AG04449 (cell line): ENCODE measurements at regions of chr10 and their contacts with region 1.

Region 1: DNA sequence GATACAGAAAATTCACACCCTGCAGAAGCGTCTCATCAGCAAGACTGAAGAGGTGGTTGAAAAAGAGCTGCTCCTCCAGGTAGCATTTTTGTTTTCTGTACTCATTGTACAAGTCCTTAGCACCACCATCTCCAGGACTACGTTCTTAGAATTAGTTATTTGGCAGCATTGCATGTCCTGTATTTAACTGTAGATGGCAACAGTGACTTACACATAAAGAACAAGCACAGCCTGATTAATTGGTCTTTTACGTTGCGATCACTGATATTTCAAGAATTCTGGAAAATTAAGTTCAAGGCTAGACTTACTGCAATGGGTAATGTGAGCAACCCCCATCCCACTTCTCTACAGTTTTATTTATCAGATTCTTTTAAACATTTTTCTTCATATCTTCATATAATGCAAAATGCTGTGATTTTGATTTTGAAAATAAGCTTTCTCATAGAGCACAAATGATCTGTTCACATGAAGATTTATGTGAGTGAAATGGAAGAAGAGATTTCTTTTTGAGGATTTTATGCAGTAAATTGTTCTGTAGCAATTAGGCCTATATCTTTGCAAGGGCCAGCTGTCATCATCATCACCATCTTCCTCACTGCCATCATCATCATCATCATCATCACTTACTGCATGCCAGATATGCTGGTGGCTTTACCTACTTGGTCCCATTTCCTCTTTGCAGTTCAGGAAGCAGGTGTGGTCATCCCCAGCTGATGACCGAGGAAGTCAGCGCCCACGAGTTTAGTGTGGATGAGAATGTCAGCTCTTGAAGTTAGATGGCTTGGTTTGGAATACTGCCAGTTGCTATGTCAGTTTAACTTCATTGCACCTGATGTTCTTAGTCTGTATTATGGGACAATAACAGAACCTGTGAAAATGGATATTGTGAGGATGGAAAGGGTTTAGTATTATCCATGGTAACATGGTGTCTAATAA is 53.4 kb downstream of the CFAP58 start:
- DNase-seq: peak; percentile 21
- H3K4me3 ChIP-seq: no peak overlapping the region
- CTCF ChIP-seq: peak; percentile 64

Region 2: GRCh38 chr10:104580774-104581675 is 174.0 kb after region 1 on chr10:
- CTCF ChIA-PET with region 1: interaction called, 44 read pairs
- POLR2A ChIA-PET with region 1: no interaction called
- DNase-seq: no peak
- H3K4me3 ChIP-seq: no peak overlapping the region
- CTCF ChIP-seq: peak; percentile 85

Region 3: DNA sequence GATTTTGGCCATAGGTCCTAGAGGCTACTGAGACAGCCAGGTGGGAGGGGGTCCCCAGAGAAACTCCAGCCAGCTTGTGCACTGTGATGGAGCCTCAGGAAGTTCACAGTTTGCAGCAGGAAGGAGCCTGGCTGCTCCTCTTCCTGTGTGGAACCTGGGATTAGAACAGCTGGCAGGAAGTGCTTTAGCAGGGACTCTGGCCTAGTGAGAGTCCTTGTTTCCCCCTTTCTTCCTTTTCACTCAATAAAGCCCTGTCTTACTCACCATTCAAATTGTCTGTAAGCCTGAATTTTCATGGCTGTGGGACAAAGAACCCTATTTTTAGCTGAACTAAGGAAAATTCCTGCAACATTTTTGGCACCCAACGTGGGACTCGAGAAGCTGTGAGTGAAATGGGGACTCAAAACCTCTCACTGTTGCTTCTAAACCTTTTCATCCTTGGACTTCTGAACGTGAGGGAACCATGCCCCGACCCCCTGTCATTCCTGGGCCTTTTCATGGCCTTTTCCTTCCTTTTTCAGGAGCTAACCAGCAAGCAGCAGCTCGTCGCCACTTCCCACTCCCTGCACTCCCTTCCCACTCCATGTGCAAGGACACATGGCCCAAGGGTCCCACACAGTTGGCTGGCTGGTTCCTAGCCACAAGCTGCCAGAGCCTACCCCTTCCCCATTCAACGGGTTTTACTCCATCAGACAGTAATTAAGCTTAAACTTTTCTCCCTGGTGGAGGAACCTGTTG is 201.3 kb after region 1 on chr10:
- CTCF ChIA-PET with region 1: interaction called, 11 read pairs
- POLR2A ChIA-PET with region 1: no interaction called
- DNase-seq: no peak
- H3K4me3 ChIP-seq: no peak overlapping the region
- CTCF ChIP-seq: no peak

Region 4: DNA sequence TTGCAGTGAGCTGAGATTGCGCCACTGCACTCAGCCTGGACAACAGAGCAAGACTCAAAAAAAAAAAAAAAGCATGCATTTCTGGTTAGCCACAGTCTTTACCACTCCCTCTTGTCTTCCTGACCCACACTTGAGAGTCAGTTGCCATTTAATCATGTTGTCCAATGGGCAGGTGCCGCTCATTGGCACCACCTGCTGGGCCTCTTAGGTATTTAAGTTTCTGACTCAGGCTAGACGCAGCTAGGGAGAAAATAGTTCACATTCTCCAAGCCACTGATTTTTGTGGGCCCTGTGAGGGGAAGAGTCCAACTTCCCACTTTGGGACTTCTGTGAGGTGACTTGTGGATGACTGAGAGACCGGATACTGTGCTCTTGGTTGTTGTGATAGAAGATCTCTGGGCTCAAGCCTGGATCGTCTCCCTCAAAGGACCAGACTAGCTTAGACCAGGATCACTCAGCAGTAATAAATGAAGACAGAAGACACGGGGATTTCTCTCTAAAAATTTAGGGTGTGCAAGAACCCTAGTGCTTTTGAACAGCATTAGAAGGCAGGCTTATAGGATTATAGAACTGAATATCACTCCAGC is 207.4 kb after region 1 on chr10:
- CTCF ChIA-PET with region 1: interaction called, 63 read pairs
- POLR2A ChIA-PET with region 1: no interaction called
- DNase-seq: no peak
- H3K4me3 ChIP-seq: no peak overlapping the region
- CTCF ChIP-seq: peak; percentile 52

Region 5: GRCh38 chr10:104622598-104623209 is 215.7 kb after region 1 on chr10:
- CTCF ChIA-PET with region 1: interaction called, 63 read pairs
- POLR2A ChIA-PET with region 1: interaction called, 3 read pairs
- DNase-seq: no peak
- H3K4me3 ChIP-seq: no peak overlapping the region
- CTCF ChIP-seq: peak; percentile 47

Region 6: GRCh38 chr10:104676874-104677273 is 269.9 kb after region 1 on chr10:
- CTCF ChIA-PET with region 1: no interaction called
- POLR2A ChIA-PET with region 1: no interaction called
- DNase-seq: no peak
- H3K4me3 ChIP-seq: no peak overlapping the region
- CTCF ChIP-seq: no peak

Region 7: DNA sequence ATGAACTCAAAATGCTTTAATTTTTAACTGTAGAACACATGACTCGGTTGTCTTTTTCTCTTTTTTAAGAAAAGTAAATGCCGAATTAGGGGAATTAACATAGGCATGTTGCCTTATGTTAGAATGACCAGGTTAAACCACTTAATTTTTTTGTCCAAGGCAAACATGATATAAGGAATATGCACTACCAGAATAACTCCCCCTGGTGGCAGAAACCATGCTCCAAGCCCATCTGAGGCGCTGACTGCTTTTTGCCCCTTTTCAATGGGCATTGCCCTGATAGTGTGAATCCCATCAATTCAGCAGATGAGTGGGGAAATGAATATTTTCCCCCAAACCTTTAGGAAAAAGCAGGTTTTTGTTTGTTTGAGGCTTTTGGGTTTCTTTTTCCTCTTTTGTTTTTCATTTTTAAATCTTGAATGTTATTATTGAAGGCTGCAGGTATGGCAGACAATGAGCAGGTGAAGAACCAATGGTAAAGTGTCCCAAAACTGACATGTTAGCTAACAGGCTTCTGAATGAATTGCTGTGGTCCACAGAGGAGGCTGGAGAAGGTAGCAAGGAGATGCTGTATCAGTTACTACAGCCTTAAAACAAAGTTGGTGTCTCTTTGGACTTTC is 518.4 kb after region 1 on chr10:
- CTCF ChIA-PET with region 1: interaction called, 12 read pairs
- POLR2A ChIA-PET with region 1: no interaction called
- DNase-seq: no peak
- H3K4me3 ChIP-seq: no peak overlapping the region
- CTCF ChIP-seq: peak; percentile 47